Activated naive CD4-positive, alpha-beta T cell treated with anti-CD3 and anti-CD28 coated beads for 36 hours (primary cell): ENCODE measurements at regions of chr1 and their contacts with region 1.

Region 1: GRCh38 chr1:115138968-115139367 is 49.7 kb upstream of the TSPAN2 start:
- DNase-seq: peak; percentile 72
- H3K4me3 Mint-ChIP-seq: peak overlapping the region; percentile 3
- H3K27ac Mint-ChIP-seq: no peak overlapping the region
- H3K4me1 Mint-ChIP-seq: peaks cover 3% of the 10 kb centered on the region
- H3K27me3 Mint-ChIP-seq: peaks cover 21% of the 10 kb centered on the region

Region 2: GRCh38 chr1:114927401-114927800 is 211.6 kb before region 1 on chr1:
- CTCF ChIA-PET with region 1: no interaction called
- intact Hi-C with region 1: no loop called
- DNase-seq: no peak
- H3K4me3 Mint-ChIP-seq: no peak overlapping the region
- H3K27ac Mint-ChIP-seq: no peak overlapping the region
- H3K4me1 Mint-ChIP-seq: peaks cover 4% of the 10 kb centered on the region
- H3K27me3 Mint-ChIP-seq: peaks cover 22% of the 10 kb centered on the region

Region 3: DNA sequence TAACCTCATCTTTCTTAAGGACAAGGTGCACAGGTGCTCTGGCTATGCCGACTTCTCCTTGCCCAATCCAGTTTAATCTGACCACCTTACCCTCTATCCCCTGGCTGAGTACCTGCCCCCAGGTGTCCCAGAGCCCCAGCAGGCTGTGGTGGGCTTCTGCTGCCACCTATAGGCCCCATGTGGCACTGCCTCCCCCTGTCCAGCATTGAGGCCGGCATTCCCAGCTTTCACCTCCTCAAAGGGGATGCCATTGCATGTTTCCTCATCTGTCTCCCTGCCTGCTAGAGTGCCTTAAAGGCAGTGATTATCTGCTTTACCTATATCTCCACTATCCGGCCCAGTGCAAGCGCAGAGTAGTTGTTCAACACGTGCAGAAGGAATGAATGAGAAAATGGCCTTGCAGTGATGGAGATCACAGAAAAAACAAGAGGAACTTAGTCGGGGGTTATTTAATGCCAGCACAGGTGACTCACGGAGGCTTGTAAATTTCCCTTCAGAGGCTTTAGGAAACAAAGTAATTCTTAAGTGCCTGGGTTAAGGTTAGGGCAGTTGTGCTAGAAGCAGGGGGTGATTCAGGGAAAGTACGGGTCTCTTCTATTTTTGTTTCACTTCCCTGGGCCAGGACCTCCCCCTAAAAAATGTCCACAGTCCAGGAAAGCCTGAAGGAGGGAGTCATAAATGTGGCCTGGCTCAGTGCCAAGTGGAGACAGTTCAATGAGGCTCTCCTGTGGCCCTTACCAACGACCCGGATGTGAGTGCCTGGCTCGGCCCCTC is 330.9 kb after region 1 on chr1:
- CTCF ChIA-PET with region 1: interaction called, 17 read pairs
- intact Hi-C with region 1: loop called (anchors 1 kb)
- DNase-seq: peak; percentile 42
- H3K4me3 Mint-ChIP-seq: no peak overlapping the region
- H3K27ac Mint-ChIP-seq: no peak overlapping the region
- H3K4me1 Mint-ChIP-seq: peaks cover 3% of the 10 kb centered on the region
- H3K27me3 Mint-ChIP-seq: peaks cover 11% of the 10 kb centered on the region

Region 4: DNA sequence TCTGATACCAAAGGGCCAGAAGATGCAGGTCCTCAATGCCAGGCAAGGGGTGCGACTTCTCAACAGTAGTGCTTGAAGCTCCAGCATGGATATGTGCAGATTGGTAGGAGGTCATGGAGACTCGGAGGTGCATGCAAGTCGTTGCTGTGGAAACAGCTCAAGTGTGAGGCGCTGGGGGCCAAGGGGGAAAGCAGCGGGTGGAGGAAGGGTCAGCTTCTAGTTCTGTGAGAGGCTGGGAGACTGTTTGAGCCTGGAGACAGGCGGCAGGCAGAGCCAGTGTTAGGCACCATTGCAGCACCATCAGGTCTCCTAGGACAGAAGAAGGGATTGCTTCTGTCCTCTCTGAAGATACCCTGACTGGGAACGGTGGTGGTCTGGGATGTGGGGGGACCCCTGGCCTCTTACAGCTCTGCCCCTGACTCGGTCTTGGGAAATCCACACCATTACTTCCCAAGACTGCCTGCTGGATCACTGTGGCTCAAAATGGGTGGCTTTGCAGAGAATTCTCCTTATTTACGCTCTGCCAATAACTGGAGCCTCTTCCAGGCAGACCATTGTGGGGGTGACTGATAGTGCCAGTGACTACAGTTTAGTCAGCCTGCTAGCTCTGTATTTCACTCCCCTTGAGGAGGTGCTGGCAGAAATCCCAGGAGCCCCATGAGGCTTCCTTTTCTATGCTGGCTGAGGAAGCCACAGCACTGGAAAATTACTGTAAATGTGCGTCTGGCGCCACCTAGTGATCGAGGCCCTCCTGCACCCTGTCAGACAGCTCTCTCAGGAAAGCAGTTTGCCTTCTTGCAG is 456.5 kb after region 1 on chr1:
- CTCF ChIA-PET with region 1: interaction called, 59 read pairs
- intact Hi-C with region 1: loop called (anchors 1 kb)
- DNase-seq: peak; percentile 82
- H3K4me3 Mint-ChIP-seq: no peak overlapping the region
- H3K27ac Mint-ChIP-seq: no peak overlapping the region
- H3K4me1 Mint-ChIP-seq: no peaks in the 10 kb centered on the region
- H3K27me3 Mint-ChIP-seq: peaks cover 3% of the 10 kb centered on the region

Region 5: GRCh38 chr1:115839029-115839678 is 700.2 kb after region 1 on chr1:
- CTCF ChIA-PET with region 1: no interaction called
- intact Hi-C with region 1: no loop called
- DNase-seq: no peak
- H3K4me3 Mint-ChIP-seq: peak overlapping the region; percentile 68
- H3K27ac Mint-ChIP-seq: peak overlapping the region; percentile 43
- H3K4me1 Mint-ChIP-seq: peaks cover 6% of the 10 kb centered on the region
- H3K27me3 Mint-ChIP-seq: peaks cover 57% of the 10 kb centered on the region